Activated naive CD4-positive, alpha-beta T cell treated with anti-CD3 and anti-CD28 coated beads for 36 hours (primary cell): ENCODE measurements at regions of chr12 and their contacts with region 1.

Region 1: DNA sequence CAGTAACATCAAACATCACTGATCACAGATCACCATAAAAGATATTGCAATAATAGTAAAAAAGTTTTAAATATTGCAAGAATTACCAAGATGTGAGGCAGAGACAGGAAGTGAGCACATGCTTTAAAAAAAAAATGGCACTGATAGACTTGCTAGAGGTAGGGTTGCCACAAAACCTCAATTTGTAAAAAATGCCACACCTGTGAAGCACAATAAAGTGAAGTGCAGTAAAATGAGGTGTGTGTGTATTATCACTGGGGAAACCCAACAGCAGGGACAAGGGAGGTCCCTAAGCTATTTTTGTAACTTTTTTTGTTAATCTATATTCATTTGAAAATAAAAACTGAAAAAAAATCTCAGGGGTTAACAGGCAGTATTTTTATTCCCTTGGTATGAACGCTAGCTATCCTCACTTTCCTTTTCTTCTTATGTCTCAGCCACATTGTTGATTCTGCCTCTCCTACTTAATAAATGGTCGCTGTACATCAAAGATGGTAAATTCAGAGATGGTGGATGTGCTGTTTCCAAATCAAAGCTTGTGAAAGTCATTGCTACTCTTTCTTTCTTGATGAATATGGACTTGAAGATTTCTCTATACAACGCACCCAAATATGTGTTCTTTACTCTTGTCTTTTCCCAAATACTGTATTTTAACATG is 14.0 kb upstream of the KLRD1 start:
- DNase-seq: no peak
- H3K4me3 Mint-ChIP-seq: no peak overlapping the region
- H3K27ac Mint-ChIP-seq: peak overlapping the region; percentile 7
- H3K4me1 Mint-ChIP-seq: peaks cover 16% of the 10 kb centered on the region
- H3K27me3 Mint-ChIP-seq: peaks cover 5% of the 10 kb centered on the region

Region 2: DNA sequence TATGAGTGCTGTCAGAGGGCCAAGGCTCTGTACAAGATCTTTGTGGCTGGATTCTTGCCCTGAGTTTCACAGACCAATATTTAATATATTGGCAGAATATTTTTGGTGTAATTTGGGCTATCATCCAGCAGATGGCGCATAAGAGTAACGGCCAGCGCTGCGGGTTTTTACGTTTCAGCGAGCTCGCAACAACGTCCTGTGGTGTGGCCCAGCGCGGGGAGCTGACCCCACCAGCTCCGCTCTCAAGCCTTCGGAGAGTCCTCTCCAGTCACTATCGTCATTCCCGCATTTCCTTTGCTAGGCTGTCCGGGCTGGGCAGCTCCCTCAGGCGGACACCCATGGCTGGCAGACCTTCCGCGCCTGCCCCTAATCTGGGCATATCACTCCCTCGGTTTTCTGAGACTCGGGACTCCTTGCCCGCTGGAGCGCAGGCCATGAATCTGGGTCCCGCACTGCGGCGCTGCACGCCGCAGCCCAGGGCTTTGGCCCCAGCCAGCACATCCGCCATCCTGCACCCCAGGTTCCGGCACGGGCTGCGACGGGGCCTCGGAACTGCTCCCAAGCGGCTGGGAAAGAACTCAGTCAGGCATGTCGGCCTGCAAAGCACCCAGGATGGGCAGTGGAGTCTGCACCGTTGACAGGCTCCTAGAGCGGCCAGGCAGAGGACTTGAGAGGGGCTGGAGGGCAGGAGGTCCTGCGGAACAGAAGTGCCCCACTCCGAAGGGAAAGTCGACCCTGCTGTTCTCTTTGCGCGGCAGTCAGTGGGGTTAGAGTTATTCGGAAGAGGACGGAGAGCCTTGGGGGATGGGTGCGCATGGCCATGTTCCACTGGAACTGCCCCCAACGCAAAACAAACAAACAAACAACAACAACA is 140.2 kb before region 1 on chr12:
- CTCF ChIA-PET with region 1: no interaction called
- intact Hi-C with region 1: loop called (anchors 5 kb)
- DNase-seq: peak; percentile 66
- H3K4me3 Mint-ChIP-seq: peak overlapping the region; percentile 76
- H3K27ac Mint-ChIP-seq: peak overlapping the region; percentile 63
- H3K4me1 Mint-ChIP-seq: peaks cover 10% of the 10 kb centered on the region
- H3K27me3 Mint-ChIP-seq: peaks cover 18% of the 10 kb centered on the region

Region 3: GRCh38 chr12:10304161-10304574 is 10.5 kb after region 1 on chr12:
- CTCF ChIA-PET with region 1: interaction called, 4 read pairs
- intact Hi-C with region 1: loop called (anchors 1 kb)
- DNase-seq: peak; percentile 59
- H3K4me3 Mint-ChIP-seq: no peak overlapping the region
- H3K27ac Mint-ChIP-seq: no peak overlapping the region
- H3K4me1 Mint-ChIP-seq: peaks cover 49% of the 10 kb centered on the region
- H3K27me3 Mint-ChIP-seq: peaks cover 5% of the 10 kb centered on the region

Region 4: DNA sequence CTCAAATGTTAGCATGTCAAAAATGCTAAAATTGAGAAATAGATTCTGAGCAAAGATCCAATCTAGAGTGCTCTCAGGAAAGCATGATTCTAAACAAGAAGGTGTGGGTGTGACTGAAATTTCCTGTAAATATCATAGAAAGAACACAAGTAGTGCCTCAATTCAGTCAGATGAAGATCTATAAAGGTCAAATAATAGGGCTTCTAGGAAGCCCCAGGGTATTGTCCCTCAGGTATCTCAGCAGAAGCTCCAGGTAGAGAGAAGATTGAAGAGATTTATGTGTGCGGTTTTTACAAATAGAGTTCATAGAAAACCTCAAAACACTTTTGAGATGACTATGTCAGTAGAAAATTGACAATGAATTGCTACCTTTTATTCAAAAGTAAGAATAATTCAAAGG is 26.9 kb after region 1 on chr12:
- CTCF ChIA-PET with region 1: interaction called, 3 read pairs
- intact Hi-C with region 1: loop called (anchors 1 kb)
- DNase-seq: no peak
- H3K4me3 Mint-ChIP-seq: no peak overlapping the region
- H3K27ac Mint-ChIP-seq: peak overlapping the region; percentile 2
- H3K4me1 Mint-ChIP-seq: peaks cover 28% of the 10 kb centered on the region
- H3K27me3 Mint-ChIP-seq: no peaks in the 10 kb centered on the region